ENCODE measurements at regions of chr18 and their contacts with region 1.

Region 1: DNA sequence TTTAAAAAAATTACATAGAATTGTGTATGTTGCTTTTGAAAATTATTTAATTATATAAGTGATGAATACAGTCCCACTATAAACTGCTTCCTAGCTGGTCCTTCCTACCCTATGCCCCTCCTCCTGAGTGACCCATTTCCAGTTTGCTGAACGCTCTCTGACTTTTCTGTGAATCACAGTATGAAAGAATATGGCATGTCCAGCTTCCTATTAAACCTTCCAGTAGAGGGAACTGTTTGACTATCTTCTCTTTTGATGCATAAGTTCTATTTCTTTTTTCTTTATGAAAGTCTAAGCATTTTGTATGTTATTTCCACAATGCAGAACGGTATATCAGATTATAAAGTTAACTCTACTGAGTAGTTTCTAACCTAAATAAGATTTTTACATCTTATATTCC is 41.3 kb downstream of the PSMG2 start:
- DNase-seq: peak; percentile 63
- H3K4me3 Mint-ChIP-seq: no peak overlapping the region
- H3K27ac Mint-ChIP-seq: no peak overlapping the region
- H3K4me1 Mint-ChIP-seq: peaks cover 17% of the 10 kb centered on the region
- H3K27me3 Mint-ChIP-seq: no peaks in the 10 kb centered on the region
- CTCF ChIP-seq: peak; percentile 43

Region 2: DNA sequence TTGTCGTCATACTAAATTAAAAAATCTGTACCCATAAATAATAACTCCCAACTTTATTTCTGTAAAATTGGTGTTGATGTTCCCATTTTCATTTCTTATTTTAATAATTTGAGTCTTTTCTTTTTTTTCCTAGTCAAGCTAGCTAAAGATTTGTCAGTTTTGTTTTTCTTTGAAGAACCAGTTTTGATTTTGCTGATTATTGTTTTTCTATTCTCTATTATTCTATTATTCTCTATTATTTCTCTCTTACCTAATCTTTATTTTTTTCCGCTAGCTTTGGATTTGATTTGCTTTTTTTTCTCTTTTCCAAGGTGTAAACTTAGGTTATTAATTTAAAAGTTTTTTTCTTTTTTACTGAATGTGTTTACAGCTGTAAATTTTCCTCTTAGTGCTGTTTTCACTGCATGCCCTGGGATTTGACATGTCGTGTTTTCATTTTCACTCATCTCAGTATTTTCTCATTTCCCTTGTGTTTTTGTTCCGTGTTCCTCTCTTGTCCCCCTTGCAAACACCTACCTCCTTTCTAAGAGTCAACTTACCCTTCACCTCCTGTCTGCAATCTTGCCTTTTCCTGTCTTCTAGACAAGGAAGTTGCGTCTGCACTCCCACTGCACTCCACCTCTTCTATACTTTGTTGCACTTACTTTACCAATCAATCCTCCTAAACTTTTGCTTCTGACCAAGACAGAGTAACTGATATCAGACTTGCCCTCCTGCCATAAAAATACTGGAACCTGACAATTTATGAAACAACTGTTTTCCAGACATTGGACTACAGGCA is 22.4 kb before region 1 on chr18:
- CTCF ChIA-PET with region 1: interaction called, 38 read pairs
- POLR2A ChIA-PET with region 1: interaction called, 5 read pairs
- intact Hi-C with region 1: no loop called
- DNase-seq: no peak
- H3K4me3 Mint-ChIP-seq: no peak overlapping the region
- H3K27ac Mint-ChIP-seq: no peak overlapping the region
- H3K4me1 Mint-ChIP-seq: no peaks in the 10 kb centered on the region
- H3K27me3 Mint-ChIP-seq: no peaks in the 10 kb centered on the region
- CTCF ChIP-seq: no peak

Region 3: GRCh38 chr18:12883684-12884405 is 139.7 kb after region 1 on chr18 and contains the start of gene PTPN2:
- CTCF ChIA-PET with region 1: interaction called, 3 read pairs
- POLR2A ChIA-PET with region 1: interaction called, 36 read pairs
- intact Hi-C with region 1: no loop called
- DNase-seq: peak; percentile 89
- H3K4me3 Mint-ChIP-seq: peak within 1 kb of the TSS; percentile 73
- H3K27ac Mint-ChIP-seq: peak within 1 kb of the TSS; percentile 96
- H3K4me1 Mint-ChIP-seq: peaks cover 29% of the 10 kb centered on the region
- H3K27me3 Mint-ChIP-seq: no peaks in the 10 kb centered on the region
- CTCF ChIP-seq: no peak
- total RNA-seq, gene PTPN2: 60.0 and 75.2 TPM in 2 replicates

Region 4: DNA sequence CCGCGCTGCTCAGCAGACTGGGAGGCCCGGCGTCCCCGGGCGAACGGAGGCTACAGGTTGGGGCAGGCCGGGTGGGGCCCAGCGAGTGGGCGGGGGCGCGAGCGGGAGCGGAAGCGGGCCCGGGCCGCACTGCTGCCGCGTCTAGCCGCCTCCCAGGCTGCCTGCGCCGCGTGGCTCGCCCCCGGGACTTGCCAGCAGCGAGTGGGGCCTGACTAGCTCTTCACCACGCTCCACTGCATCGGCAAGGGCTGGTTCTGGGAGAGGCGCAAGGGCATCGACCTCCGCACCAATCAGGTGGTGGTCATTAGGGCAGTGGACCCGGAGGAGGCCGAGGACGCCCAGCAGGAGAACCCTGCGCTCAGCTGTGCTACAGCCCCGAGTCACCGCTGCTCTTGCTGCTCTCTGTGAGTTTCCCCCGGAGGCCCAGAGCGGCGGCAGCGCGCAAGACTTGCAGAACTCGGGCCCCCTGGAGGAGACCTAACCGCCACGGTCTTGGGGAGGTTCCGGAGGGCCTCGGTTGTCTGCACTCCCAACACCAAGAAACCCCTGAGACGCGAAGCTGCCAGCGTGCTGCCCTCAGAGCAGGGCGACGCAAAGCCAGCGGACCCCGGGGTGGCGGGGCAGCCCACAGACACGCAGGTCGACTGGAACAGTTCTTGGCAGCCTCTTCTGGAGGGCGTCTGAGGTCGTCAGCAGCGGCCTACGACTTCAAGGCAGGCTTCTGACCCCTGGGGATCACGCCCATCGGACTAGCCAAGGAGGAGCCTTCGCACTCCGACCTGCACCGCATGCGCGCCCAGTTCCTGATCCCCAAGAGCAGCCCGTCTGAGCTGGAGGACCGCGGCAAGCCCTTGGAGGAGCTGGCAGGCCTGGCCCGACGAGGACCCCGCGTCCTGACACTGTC is 167.2 kb after region 1 on chr18:
- CTCF ChIA-PET with region 1: interaction called, 12 read pairs
- POLR2A ChIA-PET with region 1: no interaction called
- intact Hi-C with region 1: no loop called
- DNase-seq: no peak
- H3K4me3 Mint-ChIP-seq: no peak overlapping the region
- H3K27ac Mint-ChIP-seq: no peak overlapping the region
- H3K4me1 Mint-ChIP-seq: no peaks in the 10 kb centered on the region
- H3K27me3 Mint-ChIP-seq: no peaks in the 10 kb centered on the region
- CTCF ChIP-seq: no peak

Measured in MCF 10A (cell line).